Astrocyte of the cerebellum (primary cell): ENCODE measurements at regions of chr5 and their contacts with region 1.

Region 1: DNA sequence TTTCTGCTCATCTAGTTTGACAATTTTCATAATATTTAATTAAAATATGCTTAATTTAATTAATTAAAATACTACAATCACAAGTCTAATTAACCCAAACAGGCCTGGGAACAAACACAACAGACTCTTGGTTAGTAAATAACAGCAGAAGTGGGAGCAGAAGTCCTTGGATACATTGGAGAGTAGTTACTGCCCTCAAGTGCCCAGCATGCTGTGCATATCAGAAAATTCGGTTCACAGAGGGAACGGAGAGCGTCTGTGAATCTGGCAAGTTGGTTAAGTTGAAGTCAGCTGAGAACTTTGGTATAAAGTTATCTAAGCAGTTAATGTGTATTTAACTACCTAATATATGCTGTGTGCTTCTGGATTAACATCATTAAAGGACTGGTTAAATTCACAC is 87.0 kb upstream of the ATG10 start:
- DNase-seq: no peak
- H3K4me3 ChIP-seq: no peak overlapping the region
- CTCF ChIP-seq: no peak

Region 2: GRCh38 chr5:81825237-81825636 is 59.6 kb before region 1 on chr5:
- in situ Hi-C with region 1: no loop called
- DNase-seq: peak; percentile 34
- H3K4me3 ChIP-seq: no peak overlapping the region
- CTCF ChIP-seq: no peak

Region 3: GRCh38 chr5:81936066-81936465 is 51.2 kb after region 1 on chr5:
- in situ Hi-C with region 1: loop called (anchors 5 kb)
- DNase-seq: no peak
- H3K4me3 ChIP-seq: no peak overlapping the region
- CTCF ChIP-seq: no peak

Region 4: GRCh38 chr5:82278095-82278918 is 393.4 kb after region 1 on chr5 and contains the start of gene RPS23:
- in situ Hi-C with region 1: no loop called
- DNase-seq: peak; percentile 76
- H3K4me3 ChIP-seq: peak within 1 kb of the TSS; percentile 95
- CTCF ChIP-seq: no peak